ENCODE measurements at regions of chr20 and their contacts with region 1.

Region 1: DNA sequence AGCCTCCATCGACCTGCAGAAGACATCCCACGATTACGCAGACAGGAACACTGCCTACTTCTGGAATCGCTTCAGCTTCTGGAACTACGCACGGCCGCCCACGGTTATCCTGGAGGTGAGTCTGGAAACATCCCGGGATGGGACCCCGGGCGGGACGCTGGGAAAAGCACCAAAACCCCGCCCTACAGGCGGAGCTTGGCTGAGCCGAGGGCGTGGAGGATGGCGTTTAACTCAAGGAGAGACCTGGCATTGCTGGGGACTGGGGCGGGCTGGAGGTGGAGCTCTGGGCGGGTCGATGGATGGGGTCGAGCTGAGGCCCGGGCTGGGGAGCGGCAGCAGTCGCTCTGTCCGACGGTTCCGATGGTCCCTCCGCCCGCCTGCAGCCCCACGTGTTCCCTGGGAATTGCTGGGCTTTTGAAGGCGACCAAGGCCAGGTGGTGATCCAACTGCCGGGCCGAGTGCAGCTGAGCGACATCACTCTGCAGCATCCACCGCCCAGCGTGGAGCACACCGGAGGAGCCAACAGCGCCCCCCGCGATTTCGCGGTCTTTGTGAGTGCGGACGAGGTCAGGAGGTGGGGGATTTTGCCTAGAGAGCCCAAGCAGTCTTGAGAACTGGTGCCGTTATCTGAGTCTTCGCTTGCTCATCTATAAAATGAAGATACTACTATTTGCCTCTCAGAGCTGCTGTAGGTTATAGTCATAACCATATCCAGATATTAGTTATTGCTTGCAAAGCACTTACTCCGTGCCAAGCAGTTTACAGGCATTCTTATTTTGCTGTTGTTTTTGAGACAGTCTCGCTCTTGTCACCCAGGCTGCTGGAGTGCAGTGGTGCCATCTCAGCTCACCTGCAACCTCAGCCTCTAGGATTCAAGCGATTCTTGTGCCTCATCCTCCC is 3.8 kb downstream of the SPAG4 start:
- DNase-seq: peak; percentile 73 to 92
- H3K4me3 ChIP-seq: peak overlapping the region; percentile 61
- H3K27ac ChIP-seq: no peak overlapping the region
- H3K4me1 ChIP-seq: peaks cover 22% of the 10 kb centered on the region
- H3K27me3 ChIP-seq: no peaks in the 10 kb centered on the region
- CTCF ChIP-seq: peak; percentile 65; the same call in 1 of the 2 replicates

Region 2: DNA sequence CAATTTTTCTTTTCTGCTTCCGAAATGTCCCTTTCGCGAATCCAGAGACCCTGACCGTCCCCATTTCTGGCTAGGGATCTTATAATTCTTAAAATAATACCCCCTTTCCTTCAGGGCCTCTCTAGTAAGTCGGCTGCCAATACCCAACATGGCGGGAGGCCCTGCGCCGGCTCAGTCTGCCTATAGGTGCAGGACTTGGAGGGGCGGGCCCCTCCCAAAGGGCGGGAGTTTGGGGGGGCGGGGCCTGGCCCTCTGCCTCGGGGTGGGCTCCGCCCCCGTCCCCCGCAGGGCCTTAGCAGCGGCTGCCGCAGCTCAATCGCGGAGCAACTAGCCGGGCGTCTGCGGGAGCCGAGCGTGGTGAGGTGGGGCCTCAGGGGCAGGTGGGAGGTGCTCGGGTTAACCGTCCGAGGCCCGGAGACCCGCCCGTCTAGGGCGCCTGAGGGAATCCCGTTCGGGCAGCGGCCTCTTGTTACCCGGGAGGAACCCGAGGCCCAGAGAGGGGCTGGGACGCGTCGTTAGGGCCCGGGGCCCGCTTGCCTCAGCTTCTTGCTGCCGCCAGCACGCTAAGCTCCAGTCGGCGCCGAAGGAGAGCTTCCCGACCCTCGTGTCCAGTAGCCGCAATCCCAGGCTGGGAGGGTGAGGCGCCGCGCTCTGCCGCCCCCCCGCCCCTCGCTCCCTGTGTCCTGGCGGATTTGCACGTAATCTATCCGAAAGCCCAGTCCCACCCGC is 164.4 kb before region 1 on chr20 and contains the start of gene CEP250:
- CTCF ChIA-PET with region 1: interaction called, 13 read pairs
- POLR2A ChIA-PET with region 1: no interaction called
- intact Hi-C with region 1: loop called (anchors 5 kb)
- DNase-seq: peak; percentile 87 to 98
- H3K4me3 ChIP-seq: peak within 1 kb of the TSS; percentile 78
- H3K27ac ChIP-seq: peak within 1 kb of the TSS; percentile 88
- H3K4me1 ChIP-seq: peaks cover 22% of the 10 kb centered on the region
- H3K27me3 ChIP-seq: no peaks in the 10 kb centered on the region
- CTCF ChIP-seq: no peak
- total RNA-seq, gene CEP250: 63.6 and 79.5 TPM in 2 replicates

Region 3: DNA sequence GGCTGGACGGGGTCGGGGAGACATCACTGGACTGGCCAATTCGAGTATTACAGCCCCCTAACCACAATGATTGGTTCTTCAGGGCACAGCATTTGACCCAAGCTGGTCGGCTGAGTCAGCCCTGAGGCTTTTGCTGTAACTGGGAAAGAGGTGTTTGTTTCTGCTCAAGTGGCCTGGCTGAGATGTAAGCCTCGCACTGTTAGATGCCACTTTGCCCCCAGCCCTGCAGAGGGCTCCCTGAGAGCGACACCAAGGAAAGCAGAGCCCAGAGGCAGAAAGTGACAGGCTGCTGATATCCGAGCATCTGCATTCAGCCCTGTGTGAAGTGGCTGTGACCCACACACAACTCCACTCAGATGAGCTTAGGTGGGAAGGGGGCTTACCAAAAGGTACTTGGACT is 58.2 kb before region 1 on chr20:
- CTCF ChIA-PET with region 1: no interaction called
- POLR2A ChIA-PET with region 1: no interaction called
- intact Hi-C with region 1: loop called (anchors 1 kb)
- DNase-seq: peak; percentile 61 to 77
- H3K4me3 ChIP-seq: no peak overlapping the region
- H3K27ac ChIP-seq: peak overlapping the region; percentile 70
- H3K4me1 ChIP-seq: peaks cover 32% of the 10 kb centered on the region
- H3K27me3 ChIP-seq: no peaks in the 10 kb centered on the region
- CTCF ChIP-seq: peak; percentile 61; the same call in 1 of the 2 replicates

Region 4: DNA sequence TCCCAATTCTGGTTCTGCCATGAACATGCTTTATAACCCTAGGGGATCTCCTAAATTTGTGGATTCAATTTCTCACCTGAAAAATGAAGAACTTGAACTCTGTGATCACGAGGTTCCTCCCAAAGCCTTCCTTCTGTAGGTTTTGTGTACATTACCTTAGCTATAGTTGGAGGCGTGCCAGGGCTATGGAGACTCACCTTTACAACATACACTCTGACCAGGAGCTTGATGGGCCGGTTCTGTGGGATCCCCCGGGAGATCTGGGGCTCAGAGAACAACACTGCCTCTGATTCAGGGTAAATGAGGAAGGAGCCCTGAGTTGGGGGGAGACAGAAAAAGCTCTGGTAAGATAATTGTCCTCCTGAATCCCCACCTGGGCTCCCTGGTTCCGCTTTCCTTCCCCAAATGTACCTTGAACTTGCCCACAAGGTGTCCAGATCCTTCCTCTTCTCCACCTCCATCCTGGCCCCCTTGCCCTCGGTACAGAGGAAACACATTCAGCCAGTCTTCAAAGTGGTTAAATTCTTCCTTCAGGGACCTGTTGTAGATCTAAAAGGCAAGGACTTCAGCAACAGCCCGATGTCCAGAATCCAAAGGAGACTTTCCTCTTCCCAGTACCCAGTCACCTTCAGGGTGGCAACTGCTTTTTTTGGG is 43.3 kb before region 1 on chr20:
- CTCF ChIA-PET with region 1: interaction called, 3 read pairs
- POLR2A ChIA-PET with region 1: interaction called, 11 read pairs
- intact Hi-C with region 1: loop called (anchors 1 kb)
- DNase-seq: peak; percentile 88 to 95
- H3K4me3 ChIP-seq: peak overlapping the region; percentile 32; the same call in 1 of the 2 replicates
- H3K27ac ChIP-seq: peak overlapping the region; percentile 91
- H3K4me1 ChIP-seq: peaks cover 44% of the 10 kb centered on the region
- H3K27me3 ChIP-seq: no peaks in the 10 kb centered on the region
- CTCF ChIP-seq: no peak

Region 5: DNA sequence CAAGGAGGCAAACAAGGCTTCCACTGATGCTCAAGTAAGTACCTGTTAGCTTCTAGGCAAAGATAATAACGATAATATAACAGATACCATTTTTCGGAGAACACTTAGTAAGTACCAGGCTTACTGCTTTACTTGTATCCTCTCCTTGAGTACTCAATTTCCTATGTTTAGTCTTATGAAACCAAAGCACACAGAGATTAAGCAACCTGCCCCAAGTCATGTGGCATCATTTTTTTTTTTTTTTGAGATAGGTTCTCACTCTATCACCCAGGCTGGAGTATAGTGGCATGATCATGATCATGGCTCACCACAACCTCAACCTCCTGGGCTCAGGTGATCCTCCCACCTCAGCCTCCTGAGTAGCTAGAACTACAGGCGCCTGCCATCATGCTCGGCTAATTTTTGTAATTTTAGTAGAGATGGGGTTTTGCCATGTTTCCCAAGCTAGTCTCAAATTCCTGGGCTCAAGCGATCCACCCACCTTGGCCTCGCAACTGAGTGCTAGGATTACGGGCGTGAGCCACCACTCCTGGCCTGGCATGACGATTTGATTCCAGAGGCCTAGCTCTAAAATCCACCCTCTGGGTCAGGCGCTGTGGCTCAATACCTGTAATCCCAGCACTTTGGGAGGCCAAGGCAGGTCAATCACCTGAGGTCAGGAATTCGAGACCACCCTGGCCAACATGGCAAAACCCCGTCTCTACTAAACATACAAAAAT is 10.1 kb after region 1 on chr20:
- CTCF ChIA-PET with region 1: no interaction called
- POLR2A ChIA-PET with region 1: interaction called, 16 read pairs
- intact Hi-C with region 1: no loop called
- DNase-seq: no peak
- H3K4me3 ChIP-seq: no peak overlapping the region
- H3K27ac ChIP-seq: no peak overlapping the region
- H3K4me1 ChIP-seq: no peaks in the 10 kb centered on the region
- H3K27me3 ChIP-seq: no peaks in the 10 kb centered on the region
- CTCF ChIP-seq: no peak

Region 6: GRCh38 chr20:35699127-35699975 is 79.9 kb after region 1 on chr20 and contains the starts of genes NFS1 and ROMO1:
- CTCF ChIA-PET with region 1: no interaction called
- POLR2A ChIA-PET with region 1: no interaction called
- intact Hi-C with region 1: loop called (anchors 5 kb)
- DNase-seq: peak; percentile 69 to 82
- H3K4me3 ChIP-seq: peak within 1 kb of the TSS; percentile 96
- H3K27ac ChIP-seq: peak within 1 kb of the TSS; percentile 75
- H3K4me1 ChIP-seq: peaks cover 25% of the 10 kb centered on the region
- H3K27me3 ChIP-seq: no peaks in the 10 kb centered on the region
- CTCF ChIP-seq: no peak; the same call in 1 of the 2 replicates
- total RNA-seq, gene NFS1: 56.9 and 65.0 TPM in 2 replicates
- total RNA-seq, gene ROMO1: 175 and 271 TPM in 2 replicates

Region 7: GRCh38 chr20:36408219-36408618 is 788.8 kb after region 1 on chr20:
- CTCF ChIA-PET with region 1: no interaction called
- POLR2A ChIA-PET with region 1: interaction called, 31 read pairs
- intact Hi-C with region 1: no loop called
- DNase-seq: peak in 1 of 2 experiments; percentile 16
- H3K4me3 ChIP-seq: no peak overlapping the region
- H3K27ac ChIP-seq: no peak overlapping the region
- H3K4me1 ChIP-seq: no peaks in the 10 kb centered on the region
- H3K27me3 ChIP-seq: peaks cover 7% of the 10 kb centered on the region
- CTCF ChIP-seq: no peak

Measured in PC-9 (cell line).